Mucosa of descending colon (tissue), 3 donors: ENCODE measurements at regions of chr1 and their contacts with region 1.

Region 1: DNA sequence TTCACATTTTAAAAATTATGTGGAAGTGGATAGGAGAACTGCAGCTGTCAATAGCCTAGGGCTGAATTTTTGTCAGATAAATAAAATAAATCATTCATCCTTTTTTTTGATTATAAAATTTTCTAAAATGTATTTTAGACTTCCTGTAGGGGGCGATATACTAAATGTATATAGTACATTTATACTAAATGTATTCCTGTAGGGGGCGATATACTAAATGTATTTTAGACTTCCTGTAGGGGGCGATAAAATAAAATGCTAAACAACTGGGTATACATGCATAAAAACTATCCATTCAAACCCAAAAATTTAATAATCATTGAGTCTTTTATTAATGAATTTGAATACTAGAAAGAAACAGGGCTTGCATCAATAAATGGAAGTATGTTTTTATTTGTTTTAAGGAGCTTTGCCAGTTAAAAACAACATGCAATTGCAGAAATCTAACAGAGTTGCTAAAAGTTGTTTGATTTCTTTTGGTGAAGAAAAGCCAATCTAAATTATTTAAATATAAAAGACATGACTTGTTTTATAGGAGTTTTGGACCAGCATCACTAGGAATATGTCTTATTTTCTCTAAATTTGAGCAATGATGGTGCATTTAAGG is 31.4 kb downstream of the CLCA1 start:
- DNase-seq: no peak
- ATAC-seq: peak; percentile 59
- H3K4me3 ChIP-seq: no peak overlapping the region
- H3K4me1 ChIP-seq: peaks cover 10% of the 10 kb centered on the region
- CTCF ChIP-seq: peak; percentile 59

Region 2: DNA sequence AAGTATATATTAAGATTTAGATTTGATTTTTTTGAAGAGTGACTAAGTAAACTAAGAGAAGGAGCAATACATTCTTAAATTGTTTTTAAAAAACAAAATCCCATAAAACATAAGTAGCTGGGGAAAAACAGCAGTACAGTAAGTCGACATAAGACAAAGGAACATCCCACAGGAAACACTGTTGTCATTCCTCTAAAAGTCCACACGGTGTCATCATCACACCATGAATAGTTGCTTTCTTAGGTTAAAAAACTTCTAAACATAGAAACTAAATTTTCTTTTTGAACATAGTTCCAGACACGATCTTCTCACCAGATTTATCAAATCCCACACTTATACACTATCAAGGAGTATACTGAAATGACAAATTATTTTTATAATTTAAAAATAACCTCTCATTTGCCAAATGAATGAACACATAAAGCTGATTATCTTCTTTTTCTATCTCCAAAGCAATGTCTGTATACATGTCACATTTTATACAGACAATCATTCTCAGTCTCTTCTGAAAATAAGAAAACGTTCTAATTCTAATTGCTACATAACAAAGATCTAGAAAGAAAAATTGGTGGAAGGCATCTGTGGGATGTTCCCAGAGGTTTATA is 119.7 kb before region 1 on chr1:
- intact Hi-C with region 1: loop called (anchors 5 to 10 kb)
- DNase-seq: peak in 1 of 3 donors; percentile 13
- ATAC-seq: peak; percentile 87
- H3K4me3 ChIP-seq: no peak overlapping the region
- H3K4me1 ChIP-seq: no peaks in the 10 kb centered on the region
- CTCF ChIP-seq: peak; percentile 67

Region 3: DNA sequence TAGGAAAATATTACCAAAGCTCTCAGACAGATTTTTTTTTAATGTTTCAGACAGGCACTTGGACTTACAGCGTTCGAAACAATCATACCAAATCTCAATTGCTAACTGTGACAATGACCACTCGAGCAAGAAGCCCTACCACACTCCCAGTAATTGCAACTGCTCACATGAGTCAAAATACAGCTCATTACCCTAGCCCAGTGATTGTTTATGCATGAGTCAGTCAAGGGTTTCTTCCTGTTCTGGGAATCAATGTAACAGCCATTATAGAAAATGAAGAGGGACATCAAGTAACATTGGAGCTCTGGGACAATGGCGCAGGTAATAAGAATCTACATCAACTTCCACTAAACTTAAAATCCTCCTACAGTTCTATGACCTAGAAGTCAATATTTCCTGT is 148.2 kb after region 1 on chr1:
- intact Hi-C with region 1: no loop called
- DNase-seq: no peak
- ATAC-seq: peak; percentile 87
- H3K4me3 ChIP-seq: no peak overlapping the region
- H3K4me1 ChIP-seq: no peaks in the 10 kb centered on the region
- CTCF ChIP-seq: no peak

Region 4: DNA sequence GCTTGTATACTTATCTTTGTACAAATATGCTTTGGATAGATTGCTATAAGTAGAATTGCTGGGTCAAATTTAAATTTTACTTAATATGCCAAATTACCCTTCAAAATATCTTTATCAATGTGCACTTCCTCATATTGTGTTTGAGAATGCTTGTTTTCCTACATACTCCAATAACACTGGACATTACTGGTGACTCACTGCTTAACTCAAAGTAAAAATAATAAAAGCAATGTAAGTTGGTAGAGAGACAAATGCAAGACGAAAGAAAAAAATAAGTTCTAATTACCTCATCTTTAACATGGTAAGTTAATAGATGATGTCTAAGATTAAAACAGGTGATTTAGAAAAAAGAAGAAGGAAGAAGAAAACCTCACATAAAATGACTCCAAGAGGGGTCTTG is 196.4 kb after region 1 on chr1:
- intact Hi-C with region 1: loop called in 1 of 2 experiments (anchors 10 kb)
- DNase-seq: no peak
- ATAC-seq: no peak
- H3K4me3 ChIP-seq: no peak overlapping the region
- H3K4me1 ChIP-seq: no peaks in the 10 kb centered on the region
- CTCF ChIP-seq: no peak